IMR-90 (cell line): ENCODE measurements at regions of chr16 and their contacts with region 1.

Region 1: GRCh38 chr16:239953-240287 is 5.3 kb downstream of the FAM234A start:
- DNase-seq: peak; percentile 12
- ATAC-seq: no peak
- H3K4me3 ChIP-seq: no peak overlapping the region
- H3K27ac ChIP-seq: no peak overlapping the region
- H3K4me1 ChIP-seq: peaks cover 4% of the 10 kb centered on the region
- H3K27me3 ChIP-seq: no peaks in the 10 kb centered on the region
- CTCF ChIP-seq: no peak
- POLR2A ChIP-seq: no peak
- RAD21 ChIP-seq: no peak

Region 2: DNA sequence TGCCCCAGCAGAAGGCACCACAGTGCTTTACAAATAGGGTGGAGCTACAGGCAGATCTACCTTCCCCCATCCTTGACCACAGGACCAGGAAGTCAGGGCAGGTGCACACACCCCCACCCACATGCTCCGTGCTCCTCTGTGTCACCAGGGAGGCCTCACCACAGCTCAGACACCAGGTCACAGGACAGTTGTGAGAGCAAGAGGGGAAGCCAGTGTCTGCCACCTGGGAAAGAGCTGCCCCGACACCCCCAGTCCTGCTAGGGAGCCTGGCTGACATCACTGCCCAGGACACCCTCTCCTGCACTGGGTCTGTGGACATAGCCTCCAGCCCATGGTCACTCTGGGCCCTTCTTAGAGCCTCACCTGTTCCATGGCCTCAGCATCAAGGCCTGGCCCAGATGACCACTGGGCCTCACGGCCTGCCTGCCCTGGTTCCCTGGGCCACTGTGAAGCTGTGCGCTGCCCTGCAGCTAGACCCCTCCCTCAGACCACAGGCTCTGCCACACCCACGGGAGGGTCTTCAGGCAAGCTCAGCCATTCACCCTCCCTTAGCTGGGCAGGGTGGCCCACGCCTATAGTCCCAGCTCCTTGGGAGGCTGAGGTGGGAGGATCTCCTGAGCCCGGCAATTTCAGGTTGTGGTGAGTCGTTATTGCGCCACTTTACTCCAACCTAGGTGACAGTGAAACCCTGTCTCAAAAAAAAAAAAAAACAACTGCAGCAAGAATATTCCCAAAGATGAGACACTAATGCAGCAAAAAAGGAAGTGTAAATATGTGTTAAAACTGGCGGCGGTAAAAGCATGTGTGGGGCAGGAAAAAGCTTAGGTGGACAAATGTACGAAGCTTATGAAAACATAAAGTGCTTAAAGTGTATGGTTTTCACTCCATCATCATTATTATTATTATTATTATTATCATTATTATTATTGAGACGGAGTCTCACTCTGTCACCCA is 200.7 kb before region 1 on chr16:
- CTCF ChIA-PET with region 1: no interaction called
- POLR2A ChIA-PET with region 1: no interaction called
- dilution Hi-C with region 1: no loop called
- in situ Hi-C with region 1: no loop called
- intact Hi-C with region 1: no loop called
- DNase-seq: no peak
- ATAC-seq: no peak
- H3K4me3 ChIP-seq: no peak overlapping the region
- H3K27ac ChIP-seq: no peak overlapping the region
- H3K4me1 ChIP-seq: peaks cover 1% of the 10 kb centered on the region; the same call in 1 of the 2 replicates
- H3K27me3 ChIP-seq: no peaks in the 10 kb centered on the region
- CTCF ChIP-seq: no peak
- POLR2A ChIP-seq: no peak
- RAD21 ChIP-seq: no peak

Region 3: GRCh38 chr16:287298-287811 is 47.4 kb after region 1 on chr16:
- CTCF ChIA-PET with region 1: no interaction called
- POLR2A ChIA-PET with region 1: no interaction called
- dilution Hi-C with region 1: no loop called
- in situ Hi-C with region 1: no loop called
- intact Hi-C with region 1: no loop called
- DNase-seq: no peak
- ATAC-seq: no peak
- H3K4me3 ChIP-seq: no peak overlapping the region
- H3K27ac ChIP-seq: no peak overlapping the region
- H3K4me1 ChIP-seq: no peaks in the 10 kb centered on the region
- H3K27me3 ChIP-seq: no peaks in the 10 kb centered on the region; the same call in 1 of the 2 replicates
- CTCF ChIP-seq: no peak
- POLR2A ChIP-seq: no peak
- RAD21 ChIP-seq: no peak

Region 4: GRCh38 chr16:330741-331140 is 90.8 kb after region 1 on chr16:
- CTCF ChIA-PET with region 1: no interaction called
- POLR2A ChIA-PET with region 1: no interaction called
- dilution Hi-C with region 1: no loop called
- in situ Hi-C with region 1: no loop called
- intact Hi-C with region 1: loop called (anchors 5 kb)
- DNase-seq: no peak
- ATAC-seq: no peak
- H3K4me3 ChIP-seq: no peak overlapping the region
- H3K27ac ChIP-seq: no peak overlapping the region
- H3K4me1 ChIP-seq: peaks cover 22% of the 10 kb centered on the region
- H3K27me3 ChIP-seq: no peaks in the 10 kb centered on the region
- CTCF ChIP-seq: no peak
- POLR2A ChIP-seq: no peak
- RAD21 ChIP-seq: no peak

Region 5: GRCh38 chr16:456891-457483 is 217.1 kb after region 1 on chr16:
- CTCF ChIA-PET with region 1: no interaction called
- POLR2A ChIA-PET with region 1: no interaction called
- dilution Hi-C with region 1: no loop called
- in situ Hi-C with region 1: no loop called
- intact Hi-C with region 1: no loop called
- DNase-seq: peak; percentile 56
- ATAC-seq: peak; percentile 84
- H3K4me3 ChIP-seq: no peak overlapping the region
- H3K27ac ChIP-seq: no peak overlapping the region
- H3K4me1 ChIP-seq: peaks cover 9% of the 10 kb centered on the region
- H3K27me3 ChIP-seq: no peaks in the 10 kb centered on the region
- CTCF ChIP-seq: no peak
- POLR2A ChIP-seq: no peak
- RAD21 ChIP-seq: no peak